ENCODE measurements at regions of chr6 and their contacts with region 1.

Region 1: GRCh38 chr6:124961777-124962611 is at the start of gene RNF217:
- DNase-seq: peak; percentile 74 to 76
- H3K4me3 ChIP-seq: peak within 1 kb of the TSS; percentile 71 to 80 (median 80)
- H3K27ac ChIP-seq: peak within 1 kb of the TSS; percentile 98 to 99 (median 99)
- H3K4me1 ChIP-seq: peaks cover 18 to 33% of the 10 kb centered on the region in 2 donors
- H3K27me3 ChIP-seq: no peaks in the 10 kb centered on the region
- CTCF ChIP-seq: peak in 2 of 6 experiments; percentile 22 to 29
- POLR2A ChIP-seq: peak in 1 of 2 donors; percentile 80
- total RNA-seq, gene RNF217: 29.0 to 53.7 (median 31.0) TPM

Region 2: DNA sequence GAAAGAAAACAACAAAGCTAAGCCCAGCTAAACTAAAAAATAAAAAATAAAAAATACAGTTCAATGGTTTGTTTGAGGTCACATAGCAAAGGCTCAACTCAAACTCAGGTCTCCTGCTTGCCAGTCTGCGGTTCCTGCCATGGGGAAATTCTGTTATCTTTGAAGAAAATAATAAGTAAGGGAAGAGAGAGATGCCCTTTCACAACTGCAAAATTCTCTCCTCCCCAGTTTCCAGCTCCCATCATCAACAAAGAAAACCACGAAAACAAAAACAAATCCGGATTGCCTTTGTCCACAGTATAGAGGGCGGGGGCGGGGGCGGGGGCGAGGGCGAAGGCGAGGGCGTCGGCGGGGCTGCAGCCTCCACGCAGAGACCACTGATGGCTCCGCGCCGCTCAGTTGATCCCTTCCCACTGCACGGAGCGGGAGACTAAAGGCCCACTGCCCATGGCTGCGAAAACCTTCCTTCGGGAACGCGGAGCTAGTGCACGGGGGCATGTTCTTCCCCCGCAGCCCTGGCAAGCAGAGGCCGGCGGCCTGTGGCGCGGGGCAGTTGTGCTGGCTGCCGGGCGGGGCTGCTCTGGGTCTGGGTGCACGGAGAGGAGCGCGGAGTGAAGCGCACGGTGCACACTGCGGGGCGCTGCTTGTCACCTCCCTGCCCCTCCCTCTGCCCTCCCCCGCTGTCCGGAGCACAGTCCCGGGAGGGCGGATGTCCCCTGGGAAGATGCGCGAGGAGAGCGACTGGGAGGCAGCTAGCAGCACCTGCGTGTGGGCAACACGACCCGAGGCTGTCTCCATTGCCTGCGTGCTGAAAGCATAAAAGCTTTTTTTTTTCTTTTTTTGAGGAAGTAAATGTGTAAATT is 137.4 kb after region 1 on chr6:
- intact Hi-C with region 1: loop called (anchors 10 kb)
- DNase-seq: peak; percentile 59 to 65
- H3K4me3 ChIP-seq: peak overlapping the region in 2 of 3 donors; percentile 28 to 50
- H3K27ac ChIP-seq: no peak overlapping the region
- H3K4me1 ChIP-seq: peaks cover 0 to 5% of the 10 kb centered on the region in 2 donors
- H3K27me3 ChIP-seq: no peaks in the 10 kb centered on the region
- CTCF ChIP-seq: no peak
- POLR2A ChIP-seq: no peak

Region 3: DNA sequence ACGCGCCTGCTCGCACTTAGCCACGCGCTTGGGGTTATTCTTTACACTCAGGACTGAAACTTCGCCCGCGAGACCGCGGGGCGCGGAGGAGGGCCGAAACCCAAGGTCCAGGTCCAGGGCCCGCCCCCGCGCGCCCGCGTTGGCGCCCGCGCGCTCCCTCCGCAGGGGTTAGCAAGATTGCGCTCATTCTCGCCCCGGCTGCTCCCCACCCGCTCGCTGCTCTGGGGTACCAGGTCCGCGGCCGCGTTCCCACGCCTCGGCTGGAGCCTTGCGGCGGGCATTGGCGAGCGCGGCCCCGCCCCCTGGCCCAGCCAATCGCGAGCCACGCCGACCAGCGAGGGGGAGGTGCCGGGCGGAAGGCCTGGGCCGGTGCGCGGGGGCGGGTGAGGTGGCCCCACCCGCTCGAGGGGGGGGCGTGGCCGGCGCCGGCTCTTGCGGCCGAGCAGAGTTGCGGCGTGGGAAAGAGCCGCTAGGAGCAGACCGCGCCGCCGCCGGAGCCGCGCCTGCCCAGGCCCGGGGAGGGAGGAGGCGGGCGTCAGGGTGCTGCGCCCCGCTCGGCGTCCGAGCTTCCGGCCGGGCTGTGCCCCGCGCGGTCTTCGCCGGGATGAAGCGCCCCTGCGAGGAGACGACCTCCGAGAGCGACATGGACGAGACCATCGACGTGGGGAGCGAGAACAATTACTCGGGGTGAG is 787.3 kb after region 1 on chr6 and contains the start of gene HEY2:
- intact Hi-C with region 1: loop called (anchors 5 kb)
- DNase-seq: peak; percentile 96 to 97
- H3K4me3 ChIP-seq: peak within 1 kb of the TSS; percentile 68 to 89 (median 89)
- H3K27ac ChIP-seq: peak within 1 kb of the TSS; percentile 86 to 91 (median 91)
- H3K4me1 ChIP-seq: no peaks in the 10 kb centered on the region
- H3K27me3 ChIP-seq: no peaks in the 10 kb centered on the region
- CTCF ChIP-seq: peak in 3 of 6 experiments; percentile 11 to 32 (median 27)
- POLR2A ChIP-seq: peak; percentile 43 to 96
- total RNA-seq, gene HEY2: 3.5 to 5.5 (median 5.1) TPM

Measured in thyroid gland (tissue), 4 donors.